ENCODE measurements at regions of chr16 and their contacts with region 1.

Region 1: GRCh38 chr16:85114909-85115567 is 2.8 kb upstream of the CIBAR2 start:
- DNase-seq: peak; percentile 99
- ATAC-seq: peak; percentile 93
- H3K4me3 Mint-ChIP-seq: peak overlapping the region; percentile 24; the same call in 1 of the 2 replicates
- H3K27ac Mint-ChIP-seq: peak overlapping the region; percentile 69
- H3K4me1 Mint-ChIP-seq: peaks cover 10% of the 10 kb centered on the region
- H3K27me3 Mint-ChIP-seq: no peaks in the 10 kb centered on the region
- CTCF ChIP-seq: peak; percentile 87

Region 2: DNA sequence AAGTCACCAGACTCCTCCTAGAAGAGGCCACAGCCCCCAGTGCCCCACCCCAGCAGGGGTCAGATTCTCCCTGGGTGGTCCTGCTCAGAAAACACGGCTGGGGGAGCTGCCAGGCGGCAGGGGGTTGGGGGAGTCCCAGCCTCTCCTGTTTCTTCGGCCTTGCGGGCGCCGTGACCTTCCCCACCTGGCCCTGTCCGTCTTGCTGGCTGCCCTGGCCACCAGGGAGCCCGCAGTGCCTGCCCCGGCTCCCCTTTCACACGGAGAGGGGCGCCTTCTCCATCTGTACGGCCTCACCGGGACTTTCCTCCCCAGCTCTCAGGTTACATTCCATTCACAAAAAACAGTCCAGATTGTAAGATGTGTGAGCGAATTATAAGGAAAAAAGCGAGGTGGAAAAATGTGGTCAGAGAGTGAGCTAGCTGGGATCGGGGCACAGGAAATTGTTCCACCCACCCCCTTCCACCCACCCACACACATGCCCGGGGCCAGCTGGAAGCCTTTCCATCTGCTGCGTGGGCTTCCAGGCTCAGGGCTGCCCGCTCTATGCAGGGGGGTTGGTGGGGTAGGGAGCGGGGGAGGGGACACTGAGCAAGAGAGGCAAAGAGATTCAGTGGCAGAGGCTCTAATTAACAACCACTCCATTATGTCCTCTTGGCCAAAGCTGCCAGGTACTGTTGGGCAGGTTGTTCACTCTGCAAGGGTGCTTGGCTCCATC is 11.8 kb after region 1 on chr16:
- CTCF ChIA-PET with region 1: interaction called, 81 read pairs
- POLR2A ChIA-PET with region 1: no interaction called
- DNase-seq: peak; percentile 45
- ATAC-seq: peak; percentile 68
- H3K4me3 Mint-ChIP-seq: peak overlapping the region; percentile 10; the same call in 1 of the 2 replicates
- H3K27ac Mint-ChIP-seq: no peak overlapping the region
- H3K4me1 Mint-ChIP-seq: peaks cover 35% of the 10 kb centered on the region
- H3K27me3 Mint-ChIP-seq: no peaks in the 10 kb centered on the region; the same call in 1 of the 2 replicates
- CTCF ChIP-seq: no peak

Region 3: DNA sequence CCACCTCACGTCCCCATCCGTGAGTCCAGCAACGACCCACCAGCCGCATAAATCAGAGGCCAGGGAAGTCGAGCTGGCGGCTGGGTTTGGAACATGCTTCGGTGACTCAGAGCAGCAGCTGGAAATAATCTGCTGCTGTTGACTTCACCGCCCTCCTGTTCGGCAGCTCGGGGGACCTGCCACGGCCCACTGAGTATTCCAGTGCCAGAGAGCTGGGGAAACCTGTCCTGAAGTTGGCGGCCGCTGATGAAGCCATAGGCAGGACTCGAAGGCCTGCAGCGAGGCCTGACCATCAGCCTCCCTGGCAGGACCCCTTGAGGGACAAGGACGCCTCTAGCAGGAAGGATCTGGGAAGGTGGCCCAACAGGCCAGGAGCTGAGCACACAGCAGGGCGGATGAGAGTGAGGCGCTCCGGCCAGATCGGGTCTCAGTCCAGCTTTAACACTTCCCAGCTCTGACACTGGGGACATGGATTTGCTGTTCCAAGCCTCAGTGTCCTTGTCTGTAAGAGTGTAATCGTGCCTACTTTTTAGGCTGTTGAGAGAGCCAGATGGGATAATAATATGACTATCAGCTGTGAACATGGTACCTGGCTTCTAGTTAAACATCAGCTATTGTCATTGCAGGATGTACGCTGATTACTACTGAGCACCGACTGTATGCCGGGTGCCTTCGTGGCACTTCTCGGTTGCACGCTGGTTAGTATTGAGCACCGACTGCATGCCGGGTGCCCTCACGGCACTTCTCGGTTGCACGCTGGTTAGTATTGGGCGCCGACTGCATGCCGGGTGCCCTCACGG is 47.6 kb after region 1 on chr16:
- CTCF ChIA-PET with region 1: interaction called, 30 read pairs
- POLR2A ChIA-PET with region 1: no interaction called
- DNase-seq: no peak
- ATAC-seq: no peak
- H3K4me3 Mint-ChIP-seq: no peak overlapping the region
- H3K27ac Mint-ChIP-seq: no peak overlapping the region
- H3K4me1 Mint-ChIP-seq: peaks cover 36% of the 10 kb centered on the region
- H3K27me3 Mint-ChIP-seq: no peaks in the 10 kb centered on the region; the same call in 1 of the 2 replicates
- CTCF ChIP-seq: no peak

Region 4: GRCh38 chr16:85202631-85203461 is 87.8 kb after region 1 on chr16:
- CTCF ChIA-PET with region 1: interaction called, 26 read pairs
- POLR2A ChIA-PET with region 1: no interaction called
- DNase-seq: peak; percentile 57
- ATAC-seq: peak; percentile 71
- H3K4me3 Mint-ChIP-seq: no peak overlapping the region
- H3K27ac Mint-ChIP-seq: peak overlapping the region; percentile 12
- H3K4me1 Mint-ChIP-seq: peaks cover 36% of the 10 kb centered on the region
- H3K27me3 Mint-ChIP-seq: no peaks in the 10 kb centered on the region; the same call in 1 of the 2 replicates
- CTCF ChIP-seq: no peak

Region 5: GRCh38 chr16:85253084-85253941 is 138.3 kb after region 1 on chr16:
- CTCF ChIA-PET with region 1: interaction called, 41 read pairs
- POLR2A ChIA-PET with region 1: interaction called, 3 read pairs
- DNase-seq: peak; percentile 87
- ATAC-seq: peak; percentile 91
- H3K4me3 Mint-ChIP-seq: no peak overlapping the region
- H3K27ac Mint-ChIP-seq: no peak overlapping the region
- H3K4me1 Mint-ChIP-seq: no peaks in the 10 kb centered on the region
- H3K27me3 Mint-ChIP-seq: no peaks in the 10 kb centered on the region; the same call in 1 of the 2 replicates
- CTCF ChIP-seq: peak; percentile 99

Region 6: DNA sequence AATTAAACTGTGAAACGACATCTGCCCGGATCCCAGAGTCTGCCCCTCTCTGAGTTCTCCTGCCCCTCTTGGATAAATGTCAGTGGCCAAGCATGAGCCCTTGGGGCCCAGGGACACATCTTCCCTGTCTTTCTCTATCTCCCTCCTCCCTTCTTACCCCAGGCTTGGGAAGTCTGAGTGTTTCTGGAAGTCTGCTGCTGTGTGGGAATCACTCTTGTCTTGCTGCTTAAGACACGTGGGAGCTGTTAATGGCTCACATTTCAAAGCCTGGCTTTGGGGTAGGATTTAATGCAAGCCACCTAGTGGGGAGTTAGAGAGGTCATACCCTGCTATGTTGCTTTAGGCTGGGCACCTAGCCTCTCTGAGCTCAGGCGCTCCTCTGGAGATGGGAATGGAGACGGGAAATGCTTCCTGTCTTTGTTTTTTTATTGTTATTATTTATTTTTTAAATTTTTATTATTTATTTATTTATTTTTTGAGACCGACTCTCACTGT is 215.7 kb after region 1 on chr16:
- CTCF ChIA-PET with region 1: interaction called, 11 read pairs
- POLR2A ChIA-PET with region 1: interaction called, 6 read pairs
- DNase-seq: no peak
- ATAC-seq: peak; percentile 32
- H3K4me3 Mint-ChIP-seq: peak overlapping the region; percentile 53
- H3K27ac Mint-ChIP-seq: peak overlapping the region; percentile 47; the same call in 1 of the 2 replicates
- H3K4me1 Mint-ChIP-seq: peaks cover 73% of the 10 kb centered on the region
- H3K27me3 Mint-ChIP-seq: peaks cover 52% of the 10 kb centered on the region
- CTCF ChIP-seq: no peak